ENCODE measurements at regions of chr3 and their contacts with region 1.

Region 1: GRCh38 chr3:17431004-17431403 is 311.4 kb downstream of the TBC1D5 start:
- DNase-seq: no peak
- H3K4me3 ChIP-seq: no peak overlapping the region
- H3K27ac ChIP-seq: no peak overlapping the region
- H3K4me1 ChIP-seq: no peaks in the 10 kb centered on the region
- H3K27me3 ChIP-seq: no peaks in the 10 kb centered on the region
- CTCF ChIP-seq: peak in 4 of 6 experiments; percentile 15 to 59 (median 27)
- POLR2A ChIP-seq: no peak

Region 2: GRCh38 chr3:17831366-17831765 is 400.4 kb after region 1 on chr3:
- intact Hi-C with region 1: loop called (anchors 5 kb)
- DNase-seq: no peak
- H3K4me3 ChIP-seq: no peak overlapping the region
- H3K27ac ChIP-seq: no peak overlapping the region
- H3K4me1 ChIP-seq: no peaks in the 10 kb centered on the region
- H3K27me3 ChIP-seq: no peaks in the 10 kb centered on the region
- CTCF ChIP-seq: no peak
- POLR2A ChIP-seq: no peak

Region 3: GRCh38 chr3:17894434-17895060 is 463.5 kb after region 1 on chr3:
- intact Hi-C with region 1: no loop called
- DNase-seq: no peak
- H3K4me3 ChIP-seq: no peak overlapping the region
- H3K27ac ChIP-seq: no peak overlapping the region
- H3K4me1 ChIP-seq: no peaks in the 10 kb centered on the region
- H3K27me3 ChIP-seq: no peaks in the 10 kb centered on the region
- CTCF ChIP-seq: peak in 4 of 6 experiments; percentile 5 to 70 (median 26)
- POLR2A ChIP-seq: no peak